ENCODE measurements at regions of chr12 and their contacts with region 1.

Region 1: DNA sequence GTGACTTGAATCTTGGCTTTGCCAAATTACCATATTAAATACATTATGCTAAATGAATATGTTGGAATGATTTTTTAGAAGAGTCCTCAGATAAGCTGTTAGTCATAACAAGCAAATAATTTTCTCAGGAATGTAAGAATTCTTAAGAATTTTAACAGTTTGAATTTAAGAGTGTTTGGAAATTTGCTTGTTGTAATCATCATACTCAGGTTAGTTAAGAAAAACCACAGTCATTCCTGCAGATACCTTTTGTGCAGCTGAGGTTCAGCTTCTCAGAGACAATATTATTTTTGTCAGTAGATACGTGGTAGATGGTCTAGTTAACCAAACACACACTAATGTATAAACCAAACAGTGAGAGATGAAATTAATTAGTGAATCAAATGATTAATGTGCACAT is 8.9 kb downstream of the WNK1 start:
- DNase-seq: no peak
- H3K4me3 Mint-ChIP-seq: no peak overlapping the region
- H3K27ac Mint-ChIP-seq: no peak overlapping the region
- H3K4me1 Mint-ChIP-seq: peaks cover 20% of the 10 kb centered on the region
- H3K27me3 Mint-ChIP-seq: no peaks in the 10 kb centered on the region
- CTCF ChIP-seq: no peak

Region 2: GRCh38 chr12:774051-774614 is 12.9 kb after region 1 on chr12:
- CTCF ChIA-PET with region 1: interaction called, 7 read pairs
- intact Hi-C with region 1: loop called (anchors 2 kb)
- DNase-seq: no peak
- H3K4me3 Mint-ChIP-seq: no peak overlapping the region
- H3K27ac Mint-ChIP-seq: no peak overlapping the region
- H3K4me1 Mint-ChIP-seq: peaks cover 50% of the 10 kb centered on the region
- H3K27me3 Mint-ChIP-seq: no peaks in the 10 kb centered on the region
- CTCF ChIP-seq: no peak